Activated T-helper 2 cell treated with anti-CD3 and anti-CD28 coated beads, Interferon-gamma antibody, Interleukin-2, Interleukin-4, amounts not matched to agents 10 μg/mL and 5 μg/mL and 100 μg/mL, durations not matched to agents 14 hours and 24 hours and 36 hours (primary cell): ENCODE measurements at regions of chr2 and their contacts with region 1.

Region 1: GRCh38 chr2:135473567-135473966 is 57.5 kb downstream of the ZRANB3 start:
- DNase-seq: no peak
- H3K4me3 Mint-ChIP-seq: no peak overlapping the region
- H3K27ac Mint-ChIP-seq: no peak overlapping the region
- H3K4me1 Mint-ChIP-seq: peaks cover 8% of the 10 kb centered on the region
- H3K27me3 Mint-ChIP-seq: no peaks in the 10 kb centered on the region

Region 2: GRCh38 chr2:135573620-135574019 is 100.1 kb after region 1 on chr2:
- intact Hi-C with region 1: loop called (anchors 10 kb)
- DNase-seq: no peak
- H3K4me3 Mint-ChIP-seq: no peak overlapping the region
- H3K27ac Mint-ChIP-seq: no peak overlapping the region
- H3K4me1 Mint-ChIP-seq: peaks cover 3% of the 10 kb centered on the region
- H3K27me3 Mint-ChIP-seq: no peaks in the 10 kb centered on the region

Region 3: DNA sequence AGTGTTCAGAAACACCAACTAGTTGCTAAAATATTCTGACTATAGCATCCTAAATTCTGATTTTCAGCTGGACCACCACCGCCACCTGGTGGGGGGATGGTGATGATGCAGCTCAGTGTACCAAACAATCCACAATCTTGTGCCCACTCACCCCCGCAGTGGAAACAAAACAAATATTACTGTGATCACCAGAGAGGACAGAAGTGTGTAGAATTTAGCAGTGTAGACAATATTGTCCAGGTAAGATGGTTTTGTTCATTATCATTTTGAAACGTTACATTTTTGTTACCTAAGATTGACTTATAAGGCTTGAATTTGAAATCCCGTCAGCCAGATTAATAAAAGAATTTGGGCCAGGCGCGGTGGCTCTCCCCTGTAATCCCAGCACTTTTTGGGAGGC is 236.4 kb after region 1 on chr2:
- intact Hi-C with region 1: loop called (anchors 1 kb)
- DNase-seq: peak; percentile 46
- H3K4me3 Mint-ChIP-seq: no peak overlapping the region
- H3K27ac Mint-ChIP-seq: no peak overlapping the region
- H3K4me1 Mint-ChIP-seq: peaks cover 3% of the 10 kb centered on the region
- H3K27me3 Mint-ChIP-seq: no peaks in the 10 kb centered on the region

Region 4: DNA sequence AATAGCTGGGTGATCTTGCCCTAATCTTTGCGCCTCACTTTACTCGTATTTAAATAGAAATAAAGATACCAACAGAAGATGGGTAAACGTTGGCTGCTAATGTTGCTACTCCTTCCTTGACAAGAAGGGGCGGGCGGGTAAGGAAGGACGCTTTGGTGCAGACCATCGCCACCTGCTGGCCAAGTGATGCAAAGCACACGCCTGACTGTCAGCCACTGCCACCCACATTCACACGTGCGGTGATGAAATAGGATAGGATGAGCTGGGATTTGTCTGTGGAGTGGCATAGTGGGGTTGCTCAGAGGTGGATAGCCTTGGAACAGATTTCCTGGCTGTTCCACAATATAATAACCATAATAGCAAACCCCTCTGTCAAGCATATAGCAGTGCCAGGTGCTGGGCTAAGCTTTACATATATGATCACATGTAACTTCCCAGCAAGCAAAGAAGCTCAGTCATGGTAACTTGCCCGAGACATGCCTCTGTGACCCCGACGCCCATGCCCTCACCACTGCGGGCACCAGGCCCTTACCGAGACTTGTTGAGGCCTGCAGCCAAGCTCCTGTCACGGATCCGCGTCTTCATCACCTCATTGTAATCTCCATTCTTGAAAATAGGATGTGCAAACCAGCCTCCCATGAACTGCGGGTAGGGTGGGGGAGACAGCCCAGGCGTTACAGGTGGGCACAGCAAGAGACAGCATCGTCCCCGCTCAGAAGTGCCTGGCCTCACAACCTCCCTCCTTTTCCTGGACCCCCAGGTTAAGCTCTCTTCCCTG is 324.1 kb after region 1 on chr2:
- intact Hi-C with region 1: loop called (anchors 10 kb)
- DNase-seq: peak; percentile 67
- H3K4me3 Mint-ChIP-seq: no peak overlapping the region
- H3K27ac Mint-ChIP-seq: no peak overlapping the region
- H3K4me1 Mint-ChIP-seq: peaks cover 21% of the 10 kb centered on the region
- H3K27me3 Mint-ChIP-seq: no peaks in the 10 kb centered on the region